ENCODE measurements at regions of chr10 and their contacts with region 1.

Region 1: DNA sequence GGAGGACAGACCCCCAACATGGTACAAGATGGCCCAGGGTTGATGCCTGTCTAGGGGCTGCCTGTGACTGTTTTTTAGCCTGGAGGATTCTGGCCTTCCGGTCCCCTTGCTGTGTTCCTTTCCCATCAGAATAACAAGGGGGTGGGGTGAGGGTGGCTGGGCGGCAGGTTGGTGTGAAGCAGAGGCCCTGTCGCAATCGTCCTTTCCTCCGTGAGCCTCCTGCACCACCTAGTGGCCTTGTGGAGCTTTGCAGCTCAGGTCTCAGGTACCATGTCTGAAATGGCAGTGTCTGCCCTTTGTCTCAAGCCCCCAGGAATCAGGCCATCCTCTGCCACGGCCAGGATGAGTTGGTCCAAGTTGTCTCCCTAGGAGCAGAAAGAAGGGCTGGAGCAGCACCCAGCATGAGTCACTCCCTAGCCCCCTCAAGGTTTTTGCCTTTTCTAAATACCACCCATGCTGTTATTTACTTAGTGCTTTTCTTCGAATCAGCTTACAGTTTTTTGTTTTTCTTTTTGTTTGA is 24.2 kb downstream of the TACR2 start:
- DNase-seq: peak; percentile 74
- H3K4me3 Mint-ChIP-seq: no peak overlapping the region
- H3K27ac Mint-ChIP-seq: peak overlapping the region; percentile 63
- H3K4me1 Mint-ChIP-seq: peaks cover 39% of the 10 kb centered on the region
- H3K27me3 Mint-ChIP-seq: no peaks in the 10 kb centered on the region

Region 2: DNA sequence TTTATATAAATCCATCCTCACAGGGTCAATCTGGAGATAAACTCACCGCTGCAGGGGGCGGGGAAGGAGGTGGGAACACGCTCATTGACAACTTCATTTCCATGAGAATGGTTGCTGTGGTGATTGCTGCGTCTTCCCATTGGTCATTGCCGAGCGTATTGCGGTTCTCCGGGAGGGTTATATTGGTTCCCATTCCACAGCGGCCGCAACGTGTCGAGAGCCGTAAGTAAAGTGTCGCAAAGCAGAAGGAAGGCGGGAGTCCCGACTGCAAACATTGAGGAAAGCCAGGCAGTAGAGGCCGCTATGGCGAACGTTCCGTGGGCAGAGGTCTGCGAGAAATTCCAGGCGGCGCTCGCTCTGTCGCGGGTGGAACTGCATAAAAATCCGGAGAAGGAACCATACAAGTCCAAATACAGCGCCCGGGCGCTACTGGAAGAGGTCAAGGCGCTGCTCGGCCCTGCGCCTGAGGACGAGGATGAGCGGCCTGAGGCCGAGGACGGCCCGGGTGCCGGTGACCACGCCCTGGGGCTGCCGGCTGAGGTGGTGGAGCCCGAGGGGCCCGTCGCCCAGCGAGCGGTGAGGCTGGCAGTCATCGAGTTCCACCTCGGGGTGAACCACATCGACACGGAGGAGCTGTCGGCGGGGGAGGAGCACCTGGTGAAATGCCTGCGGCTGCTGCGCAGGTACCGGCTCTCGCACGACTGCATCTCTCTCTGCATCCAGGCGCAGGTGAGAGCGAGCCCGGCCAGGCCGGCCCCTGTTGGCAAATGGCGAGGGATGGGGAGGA is 403.8 kb before region 1 on chr10 and contains the start of gene KIFBP:
- intact Hi-C with region 1: loop called (anchors 5 kb)
- DNase-seq: peak; percentile 84
- H3K4me3 Mint-ChIP-seq: peak within 1 kb of the TSS; percentile 93
- H3K27ac Mint-ChIP-seq: peak within 1 kb of the TSS; percentile 87
- H3K4me1 Mint-ChIP-seq: peaks cover 34% of the 10 kb centered on the region
- H3K27me3 Mint-ChIP-seq: no peaks in the 10 kb centered on the region
- total RNA-seq, gene KIFBP: 16.4 and 16.9 TPM in 2 replicates

Region 3: GRCh38 chr10:69092959-69093850 is 299.3 kb before region 1 on chr10:
- intact Hi-C with region 1: loop called (anchors 5 kb)
- DNase-seq: peak; percentile 80
- H3K4me3 Mint-ChIP-seq: peak overlapping the region; percentile 45
- H3K27ac Mint-ChIP-seq: peak overlapping the region; percentile 72
- H3K4me1 Mint-ChIP-seq: peaks cover 51% of the 10 kb centered on the region
- H3K27me3 Mint-ChIP-seq: no peaks in the 10 kb centered on the region

Region 4: DNA sequence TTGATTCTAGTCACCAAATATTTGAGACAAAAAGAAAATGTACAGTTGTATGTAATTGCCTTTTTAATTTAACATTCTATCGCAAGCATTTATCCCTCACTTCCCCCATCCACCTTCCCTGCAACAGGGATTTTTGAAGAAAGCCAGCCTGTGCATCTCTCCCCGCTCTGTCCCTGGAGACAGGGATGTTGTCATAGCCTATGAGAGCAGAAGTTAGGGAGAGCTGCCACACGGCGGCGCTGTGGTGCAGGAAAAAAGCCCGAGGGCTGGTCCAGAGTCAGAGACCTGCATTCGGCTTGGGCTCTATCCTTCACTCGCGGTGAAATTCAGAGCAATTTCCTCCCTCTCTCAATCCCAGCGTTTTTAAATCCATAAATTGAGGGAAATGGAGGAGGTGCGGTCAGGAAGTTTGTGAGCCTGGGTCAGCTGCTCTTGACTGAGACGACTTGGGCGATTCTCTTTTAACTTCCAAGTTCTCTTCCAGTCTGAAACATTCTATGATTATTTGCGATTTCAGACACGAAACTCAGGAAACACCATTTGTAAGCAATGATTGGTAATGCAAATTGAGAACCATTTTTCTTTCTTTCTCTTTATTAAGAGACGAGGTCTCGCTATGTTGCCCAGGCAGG is 154.9 kb before region 1 on chr10:
- intact Hi-C with region 1: loop called (anchors 1 kb)
- DNase-seq: peak; percentile 78
- H3K4me3 Mint-ChIP-seq: no peak overlapping the region
- H3K27ac Mint-ChIP-seq: no peak overlapping the region
- H3K4me1 Mint-ChIP-seq: peaks cover 15% of the 10 kb centered on the region
- H3K27me3 Mint-ChIP-seq: peaks cover 2% of the 10 kb centered on the region

Region 5: DNA sequence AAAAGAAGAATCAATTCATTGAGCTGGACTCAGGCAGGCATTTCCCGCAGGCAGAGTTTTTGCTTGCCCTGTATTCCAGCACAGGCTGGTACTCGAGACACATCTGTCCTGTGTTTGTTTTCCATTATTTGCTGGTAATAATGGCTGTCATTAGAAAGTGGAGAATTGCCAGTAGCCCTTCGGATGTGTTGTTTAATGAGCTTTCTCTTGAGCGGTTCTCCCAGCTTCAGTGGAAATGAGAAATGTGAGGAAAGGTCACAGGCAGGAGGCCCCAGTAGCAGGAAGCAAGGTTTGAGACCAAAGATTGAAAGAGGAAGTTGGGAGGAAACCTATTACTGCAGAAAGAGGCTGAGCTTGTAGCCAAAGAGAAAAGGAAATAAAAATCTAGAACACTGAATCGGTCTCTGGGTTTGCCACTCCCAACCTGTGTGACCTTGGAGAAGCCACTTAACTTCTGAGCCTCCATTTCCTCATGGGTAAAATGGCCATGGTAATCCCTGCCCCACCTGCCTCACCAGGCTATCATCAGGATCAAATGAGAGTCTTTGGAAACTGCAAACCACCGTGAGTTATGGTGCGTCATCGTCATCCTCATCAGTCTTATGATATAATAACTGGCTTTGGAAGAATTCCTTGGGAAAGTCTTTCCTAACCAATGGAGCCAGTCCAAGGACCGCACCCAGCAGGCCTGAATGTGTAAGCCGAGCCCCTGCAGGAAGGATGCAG is 43.6 kb before region 1 on chr10:
- intact Hi-C with region 1: loop called (anchors 5 kb)
- DNase-seq: no peak
- H3K4me3 Mint-ChIP-seq: peak overlapping the region; percentile 19
- H3K27ac Mint-ChIP-seq: peak overlapping the region; percentile 78
- H3K4me1 Mint-ChIP-seq: peaks cover 72% of the 10 kb centered on the region
- H3K27me3 Mint-ChIP-seq: no peaks in the 10 kb centered on the region

Region 6: DNA sequence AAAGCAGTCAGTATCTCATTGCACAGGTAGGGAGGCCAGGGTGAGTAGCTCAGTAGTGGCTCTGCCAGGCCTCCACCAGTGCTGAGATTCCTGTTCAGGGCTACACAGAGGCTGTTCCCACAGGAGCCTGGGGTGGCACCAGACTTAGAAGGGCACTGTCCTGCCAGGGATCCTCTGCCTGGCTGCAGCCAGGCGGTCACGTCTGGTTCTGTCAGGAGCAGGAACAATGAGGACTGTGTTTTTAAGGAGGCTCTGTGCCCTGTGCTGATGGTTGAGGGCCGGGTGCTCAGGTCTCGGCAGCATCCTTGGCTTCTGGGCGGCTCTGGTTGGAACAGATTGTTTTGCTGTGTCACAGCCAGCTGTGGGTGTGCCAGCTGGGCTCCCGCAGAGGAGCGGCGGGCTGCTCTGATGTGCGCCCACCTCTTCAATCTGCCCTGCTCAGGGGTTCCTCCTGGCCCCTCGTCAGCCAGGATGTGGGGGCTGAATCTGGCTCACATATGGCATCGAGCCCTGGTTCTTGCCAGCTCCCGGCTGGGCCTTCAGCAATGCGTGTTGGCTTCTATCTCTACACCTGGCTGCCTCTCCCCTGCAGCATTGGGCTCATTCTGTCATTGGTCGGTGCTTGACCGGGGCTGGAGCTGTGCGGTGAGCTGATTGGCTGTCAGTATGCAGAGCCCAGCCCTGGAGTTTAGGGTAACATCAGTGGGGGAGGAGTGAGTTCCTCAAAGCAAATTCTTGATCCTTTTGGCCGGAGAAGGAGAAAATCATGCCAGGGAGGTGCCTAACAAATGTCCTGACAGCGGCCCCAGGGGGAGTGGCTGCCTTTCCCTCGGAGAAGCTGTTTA is 17.0 kb before region 1 on chr10:
- intact Hi-C with region 1: no loop called
- DNase-seq: no peak
- H3K4me3 Mint-ChIP-seq: no peak overlapping the region
- H3K27ac Mint-ChIP-seq: no peak overlapping the region
- H3K4me1 Mint-ChIP-seq: peaks cover 5% of the 10 kb centered on the region
- H3K27me3 Mint-ChIP-seq: no peaks in the 10 kb centered on the region

Measured in activated T-helper 1 cell treated with anti-CD3 and anti-CD28 coated beads, Interleukin-12 subunit alpha, Interleukin-12 subunit beta, Interleukin-2, Interleukin-4 antibody, amounts not matched to agents 30 ng/mL and 10 ng/mL and 1 ng/mL, durations not matched to agents 14 hours and 24 hours and 36 hours (primary cell).